ENCODE measurements at regions of chr15 and their contacts with region 1.

Region 1: GRCh38 chr15:37072181-37072580 is 28.2 kb downstream of the MEIS2 start:
- DNase-seq: no peak
- ATAC-seq: no peak
- H3K4me3 ChIP-seq: no peak overlapping the region
- H3K27ac ChIP-seq: no peak overlapping the region
- H3K4me1 ChIP-seq: peaks cover 12% of the 10 kb centered on the region
- H3K27me3 ChIP-seq: no peaks in the 10 kb centered on the region
- CTCF ChIP-seq: no peak

Region 2: GRCh38 chr15:37149146-37149545 is 77.0 kb after region 1 on chr15:
- CTCF ChIA-PET with region 1: interaction called, 12 read pairs
- POLR2A ChIA-PET with region 1: no interaction called
- intact Hi-C with region 1: no loop called
- DNase-seq: no peak
- ATAC-seq: no peak
- H3K4me3 ChIP-seq: no peak overlapping the region
- H3K27ac ChIP-seq: no peak overlapping the region
- H3K4me1 ChIP-seq: no peaks in the 10 kb centered on the region
- H3K27me3 ChIP-seq: peaks cover 36% of the 10 kb centered on the region
- CTCF ChIP-seq: no peak

Measured in PC-3 (cell line).